Activated T-helper 1 cell treated with anti-CD3 and anti-CD28 coated beads, Interleukin-12 subunit alpha, Interleukin-12 subunit beta, Interleukin-2, Interleukin-4 antibody, amounts not matched to agents 30 ng/mL and 10 ng/mL and 1 ng/mL, durations not matched to agents 14 hours and 24 hours and 36 hours (primary cell): ENCODE measurements at regions of chr9 and their contacts with region 1.

Region 1: DNA sequence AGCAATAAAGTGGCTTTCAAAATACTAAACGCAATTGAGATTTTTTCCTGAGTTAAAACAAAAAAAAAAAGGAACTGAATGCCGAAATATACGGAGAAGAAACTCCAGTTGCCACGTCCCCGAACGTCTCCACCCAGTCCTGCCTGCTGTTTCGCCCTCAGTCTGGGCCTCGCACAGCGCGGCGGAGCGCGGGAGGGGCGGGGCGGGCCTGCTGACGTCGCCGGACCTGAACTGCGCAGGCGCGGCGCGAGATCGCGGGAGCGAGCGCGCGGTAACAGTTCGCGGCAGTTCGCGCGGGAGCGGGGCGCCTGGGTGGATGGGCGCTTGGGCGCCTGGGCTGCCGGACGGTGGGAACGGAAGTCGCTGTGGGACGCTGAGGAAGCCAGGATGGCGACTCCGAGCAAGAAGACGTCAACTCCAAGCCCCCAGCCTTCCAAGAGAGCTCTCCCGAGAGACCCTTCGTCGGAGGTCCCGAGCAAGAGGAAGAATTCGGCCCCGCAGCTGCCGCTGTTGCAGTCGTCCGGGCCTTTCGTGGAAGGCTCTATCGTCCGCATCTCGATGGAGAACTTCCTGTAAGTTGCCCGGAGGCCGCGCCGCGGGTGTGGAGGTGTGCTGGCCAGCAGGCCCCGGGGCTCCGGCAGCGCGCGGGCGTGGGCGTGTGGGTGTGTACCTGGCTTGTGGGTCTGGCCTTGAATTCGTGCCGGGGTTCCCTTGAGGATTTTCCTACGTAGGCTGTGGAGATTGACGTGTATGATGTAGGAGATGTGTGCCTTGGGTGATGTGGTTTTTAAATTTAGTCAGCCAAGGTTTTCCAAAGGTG is at the start of gene SMC5:
- DNase-seq: peak; percentile 90
- H3K4me3 Mint-ChIP-seq: peak within 1 kb of the TSS; percentile 99
- H3K27ac Mint-ChIP-seq: peak within 1 kb of the TSS; percentile 95
- H3K4me1 Mint-ChIP-seq: peaks cover 49% of the 10 kb centered on the region
- H3K27me3 Mint-ChIP-seq: peaks cover 7% of the 10 kb centered on the region
- total RNA-seq, gene SMC5: 49.5 and 53.6 TPM in 2 replicates

Region 2: GRCh38 chr9:69471433-69471832 is 787.5 kb before region 1 on chr9:
- intact Hi-C with region 1: no loop called
- DNase-seq: no peak
- H3K4me3 Mint-ChIP-seq: no peak overlapping the region
- H3K27ac Mint-ChIP-seq: no peak overlapping the region
- H3K4me1 Mint-ChIP-seq: peaks cover 36% of the 10 kb centered on the region
- H3K27me3 Mint-ChIP-seq: no peaks in the 10 kb centered on the region

Region 3: DNA sequence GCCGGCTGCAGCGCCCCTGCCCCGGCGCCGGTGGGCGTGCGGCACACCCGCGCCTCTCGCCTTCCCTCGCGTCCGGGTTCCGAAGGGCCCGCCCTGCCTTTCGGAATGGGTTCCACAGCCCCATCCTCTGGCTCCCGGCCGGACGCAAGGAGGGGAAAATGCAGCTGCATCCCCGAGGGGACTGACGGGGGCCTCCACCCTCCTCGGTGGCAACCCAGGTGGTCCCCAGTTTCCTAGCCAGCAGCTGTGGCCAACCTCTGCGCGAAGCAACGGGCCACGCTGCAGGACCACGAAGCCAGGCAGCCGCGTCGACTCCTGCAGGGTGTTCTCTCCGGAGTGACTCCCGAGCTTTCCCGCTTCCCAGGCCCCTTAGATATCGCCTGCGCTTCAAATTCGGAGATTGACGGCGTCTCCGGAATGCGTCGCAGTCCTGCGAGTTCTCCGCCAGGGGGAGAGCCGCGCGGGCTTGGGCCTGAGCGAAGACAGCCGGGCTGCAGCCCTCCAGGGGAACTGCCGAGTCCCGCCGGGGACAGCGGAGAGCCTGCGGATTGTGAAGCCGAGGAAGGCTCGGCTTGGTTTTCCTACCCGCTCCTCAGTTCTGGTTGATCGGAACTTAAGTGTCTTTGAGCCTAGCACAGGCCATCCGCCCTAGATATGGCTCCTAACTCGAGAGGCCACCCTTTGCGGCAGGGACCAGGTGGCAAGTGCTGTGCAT is 586.1 kb before region 1 on chr9:
- intact Hi-C with region 1: loop called (anchors 2 kb)
- DNase-seq: peak; percentile 65
- H3K4me3 Mint-ChIP-seq: peak overlapping the region; percentile 83
- H3K27ac Mint-ChIP-seq: peak overlapping the region; percentile 15
- H3K4me1 Mint-ChIP-seq: peaks cover 7% of the 10 kb centered on the region
- H3K27me3 Mint-ChIP-seq: peaks cover 42% of the 10 kb centered on the region

Region 4: GRCh38 chr9:70229579-70229978 is 29.3 kb before region 1 on chr9:
- intact Hi-C with region 1: no loop called
- DNase-seq: no peak
- H3K4me3 Mint-ChIP-seq: no peak overlapping the region
- H3K27ac Mint-ChIP-seq: no peak overlapping the region
- H3K4me1 Mint-ChIP-seq: no peaks in the 10 kb centered on the region
- H3K27me3 Mint-ChIP-seq: peaks cover 3% of the 10 kb centered on the region

Region 5: DNA sequence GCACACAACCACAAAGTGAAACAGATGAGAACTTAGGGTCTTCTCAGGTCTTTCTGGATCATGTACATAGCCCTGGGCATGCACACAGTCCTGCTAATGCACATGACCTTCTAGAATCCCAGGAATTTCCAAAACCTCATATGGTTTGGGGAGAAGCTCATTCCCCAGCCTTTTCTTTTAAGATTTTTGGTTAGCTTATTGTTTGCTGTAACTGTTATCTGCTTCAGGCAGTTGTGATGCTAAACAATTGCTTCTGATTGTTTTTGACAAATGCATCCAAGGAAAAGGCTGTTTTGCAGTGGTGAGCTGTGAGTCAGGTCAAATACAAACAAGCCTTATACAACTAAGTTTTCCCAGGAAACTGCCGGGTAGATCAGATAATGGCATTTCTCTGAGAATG is 32.5 kb after region 1 on chr9:
- intact Hi-C with region 1: loop called (anchors 2 kb)
- DNase-seq: no peak
- H3K4me3 Mint-ChIP-seq: no peak overlapping the region
- H3K27ac Mint-ChIP-seq: no peak overlapping the region
- H3K4me1 Mint-ChIP-seq: peaks cover 7% of the 10 kb centered on the region
- H3K27me3 Mint-ChIP-seq: no peaks in the 10 kb centered on the region

Region 6: GRCh38 chr9:70324963-70325362 is 66.1 kb after region 1 on chr9:
- intact Hi-C with region 1: loop called (anchors 5 kb)
- DNase-seq: no peak
- H3K4me3 Mint-ChIP-seq: no peak overlapping the region
- H3K27ac Mint-ChIP-seq: no peak overlapping the region
- H3K4me1 Mint-ChIP-seq: no peaks in the 10 kb centered on the region
- H3K27me3 Mint-ChIP-seq: no peaks in the 10 kb centered on the region

Region 7: DNA sequence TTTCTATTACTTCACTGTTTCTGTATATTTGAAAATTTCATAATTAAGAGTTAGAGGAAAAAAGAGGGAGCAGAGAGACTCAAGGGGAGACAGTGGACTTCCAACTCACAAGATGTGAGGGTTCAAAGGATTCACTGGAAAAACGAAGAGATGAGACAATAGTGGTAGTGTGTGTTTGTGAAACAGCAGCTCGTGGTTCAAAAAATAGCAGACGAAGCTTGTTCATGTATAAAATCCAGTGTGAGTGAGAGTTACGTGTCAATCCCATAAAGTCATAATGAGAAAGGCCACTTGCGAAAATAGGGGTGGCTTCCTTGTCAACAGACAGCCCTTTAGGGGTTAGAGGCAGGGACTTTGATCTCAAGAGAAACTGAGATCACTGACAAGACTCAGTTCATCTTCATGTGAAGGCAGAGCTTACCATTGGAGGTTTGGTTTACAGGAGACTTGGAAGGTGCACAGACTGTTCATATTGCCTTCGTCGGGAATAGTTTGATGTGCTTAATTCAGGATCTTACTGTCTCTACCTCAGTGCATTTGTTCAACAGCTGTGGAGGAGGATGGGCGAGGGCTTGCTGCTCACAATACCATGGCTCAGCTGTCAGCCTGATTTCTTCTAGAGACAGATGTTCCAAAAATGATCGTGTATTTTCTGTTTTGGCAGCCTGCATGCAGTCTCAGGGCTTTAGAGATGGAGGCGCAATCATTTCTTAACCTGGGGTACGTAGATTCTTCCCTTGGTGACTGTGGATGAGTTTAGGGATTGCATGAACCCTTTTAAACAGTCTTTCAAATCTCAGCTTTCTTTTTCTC is 261.2 kb after region 1 on chr9:
- intact Hi-C with region 1: loop called (anchors 1 kb)
- DNase-seq: peak; percentile 6
- H3K4me3 Mint-ChIP-seq: peak overlapping the region; percentile 53
- H3K27ac Mint-ChIP-seq: peak overlapping the region; percentile 68
- H3K4me1 Mint-ChIP-seq: peaks cover 17% of the 10 kb centered on the region
- H3K27me3 Mint-ChIP-seq: no peaks in the 10 kb centered on the region

Region 8: GRCh38 chr9:70563431-70564204 is 304.7 kb after region 1 on chr9:
- intact Hi-C with region 1: loop called (anchors 1 kb)
- DNase-seq: peak; percentile 70
- H3K4me3 Mint-ChIP-seq: peak overlapping the region; percentile 69
- H3K27ac Mint-ChIP-seq: peak overlapping the region; percentile 89
- H3K4me1 Mint-ChIP-seq: peaks cover 72% of the 10 kb centered on the region
- H3K27me3 Mint-ChIP-seq: peaks cover 2% of the 10 kb centered on the region

Region 9: DNA sequence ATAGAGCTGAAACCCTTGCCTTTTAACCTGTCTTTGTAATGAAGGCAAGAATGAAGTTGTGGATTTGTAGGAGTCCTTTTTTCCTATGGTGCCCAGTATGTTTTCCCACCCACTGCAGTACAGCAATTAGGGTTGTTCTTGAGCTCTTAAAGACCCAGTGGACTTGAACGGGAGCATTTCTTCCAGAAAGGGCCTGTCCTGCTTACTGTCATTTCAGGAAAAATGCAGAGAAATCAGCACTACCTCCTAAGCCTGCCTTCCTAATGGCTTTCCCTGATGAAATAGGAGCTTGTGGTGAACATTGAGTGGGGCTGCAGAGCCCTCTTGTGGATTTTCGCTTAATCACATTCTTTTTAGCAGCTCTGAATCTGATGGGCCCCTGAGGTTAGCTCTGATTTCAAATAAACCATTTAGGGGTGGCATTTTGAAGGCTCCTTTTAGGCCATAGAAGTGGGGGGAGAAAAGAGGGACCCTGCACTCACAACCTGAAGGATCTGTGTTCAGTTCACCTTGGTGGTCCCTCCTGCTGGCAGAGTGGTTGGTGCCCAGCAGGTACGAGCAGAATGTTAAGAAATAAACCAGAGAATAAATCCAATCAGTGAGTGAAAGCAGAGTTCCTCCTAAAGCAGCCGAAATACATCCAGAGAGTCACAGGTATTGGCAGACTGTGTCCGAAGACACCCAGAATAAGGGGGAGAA is 343.6 kb after region 1 on chr9:
- intact Hi-C with region 1: loop called (anchors 5 kb)
- DNase-seq: peak; percentile 23
- H3K4me3 Mint-ChIP-seq: no peak overlapping the region
- H3K27ac Mint-ChIP-seq: no peak overlapping the region
- H3K4me1 Mint-ChIP-seq: peaks cover 5% of the 10 kb centered on the region
- H3K27me3 Mint-ChIP-seq: peaks cover 2% of the 10 kb centered on the region